OCI-LY7 (cell line): ENCODE measurements at regions of chr11 and their contacts with region 1.

Region 1: GRCh38 chr11:28315440-28315839 is 207.3 kb downstream of the METTL15 start:
- DNase-seq: no peak
- H3K4me3 ChIP-seq: no peak overlapping the region
- H3K27ac ChIP-seq: no peak overlapping the region
- H3K4me1 ChIP-seq: no peaks in the 10 kb centered on the region
- CTCF ChIP-seq: no peak

Region 2: GRCh38 chr11:28338371-28338770 is 22.9 kb after region 1 on chr11:
- CTCF ChIA-PET with region 1: no interaction called
- POLR2A ChIA-PET with region 1: no interaction called
- intact Hi-C with region 1: loop called (anchors 2 kb)
- DNase-seq: no peak
- H3K4me3 ChIP-seq: no peak overlapping the region
- H3K27ac ChIP-seq: no peak overlapping the region
- H3K4me1 ChIP-seq: no peaks in the 10 kb centered on the region
- CTCF ChIP-seq: no peak